Activated T-helper 1 cell treated with anti-CD3 and anti-CD28 coated beads, Interleukin-12 subunit alpha, Interleukin-12 subunit beta, Interleukin-2, Interleukin-4 antibody, amounts not matched to agents 30 ng/mL and 10 ng/mL and 1 ng/mL, durations not matched to agents 14 hours and 24 hours and 36 hours (primary cell): ENCODE measurements at regions of chr15 and their contacts with region 1.

Region 1: DNA sequence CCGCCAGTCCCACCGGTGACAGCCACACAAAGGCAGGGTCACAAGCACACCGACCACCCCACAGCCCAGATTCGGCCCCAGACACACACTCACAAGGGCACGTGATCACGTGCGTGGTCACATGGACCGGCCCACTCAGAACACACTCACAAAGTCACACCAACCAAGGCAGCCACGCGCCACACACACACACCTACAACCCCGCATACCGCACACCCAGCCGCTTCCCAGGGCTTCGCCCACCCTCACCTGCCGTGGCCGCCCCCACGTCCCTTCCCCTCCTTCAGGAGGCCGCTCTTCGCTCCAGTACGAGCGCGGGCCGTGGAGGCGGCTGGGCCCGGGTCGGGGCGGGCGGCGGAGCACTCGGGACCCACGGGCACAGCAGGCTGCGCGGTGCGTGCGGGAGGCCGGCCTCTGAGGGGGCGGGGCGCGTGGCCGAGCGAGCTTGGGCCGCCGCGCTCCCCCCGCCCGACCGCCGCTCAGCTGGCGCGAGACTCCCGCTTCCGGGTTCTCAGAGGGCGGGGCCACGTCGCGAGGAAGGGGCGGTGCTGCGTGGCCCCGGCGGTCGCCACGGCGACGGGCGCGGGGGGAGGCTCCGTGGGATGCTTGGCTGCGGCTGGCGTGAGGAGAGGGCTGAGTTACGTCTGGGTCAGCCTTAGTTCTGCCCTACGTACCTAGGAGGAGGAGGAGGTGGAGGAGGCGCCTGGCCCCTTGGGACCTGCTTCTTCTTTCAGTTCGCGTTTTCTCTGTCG is at the start of gene SPG21:
- DNase-seq: peak; percentile 92
- H3K4me3 Mint-ChIP-seq: peak within 1 kb of the TSS; percentile 99
- H3K27ac Mint-ChIP-seq: peak within 1 kb of the TSS; percentile 93
- H3K4me1 Mint-ChIP-seq: peaks cover 51% of the 10 kb centered on the region
- H3K27me3 Mint-ChIP-seq: no peaks in the 10 kb centered on the region
- total RNA-seq, gene SPG21: 70.2 and 73.3 TPM in 2 replicates

Region 2: GRCh38 chr15:64611085-64611725 is 378.4 kb before region 1 on chr15:
- intact Hi-C with region 1: no loop called
- DNase-seq: no peak
- H3K4me3 Mint-ChIP-seq: no peak overlapping the region
- H3K27ac Mint-ChIP-seq: no peak overlapping the region
- H3K4me1 Mint-ChIP-seq: peaks cover 21% of the 10 kb centered on the region
- H3K27me3 Mint-ChIP-seq: no peaks in the 10 kb centered on the region

Region 3: GRCh38 chr15:64702816-64703646 is 286.6 kb before region 1 on chr15:
- intact Hi-C with region 1: loop called (anchors 1 kb)
- DNase-seq: peak; percentile 93
- H3K4me3 Mint-ChIP-seq: peak overlapping the region; percentile 82
- H3K27ac Mint-ChIP-seq: peak overlapping the region; percentile 78
- H3K4me1 Mint-ChIP-seq: peaks cover 51% of the 10 kb centered on the region
- H3K27me3 Mint-ChIP-seq: peaks cover under 1% of the 10 kb centered on the region

Region 4: DNA sequence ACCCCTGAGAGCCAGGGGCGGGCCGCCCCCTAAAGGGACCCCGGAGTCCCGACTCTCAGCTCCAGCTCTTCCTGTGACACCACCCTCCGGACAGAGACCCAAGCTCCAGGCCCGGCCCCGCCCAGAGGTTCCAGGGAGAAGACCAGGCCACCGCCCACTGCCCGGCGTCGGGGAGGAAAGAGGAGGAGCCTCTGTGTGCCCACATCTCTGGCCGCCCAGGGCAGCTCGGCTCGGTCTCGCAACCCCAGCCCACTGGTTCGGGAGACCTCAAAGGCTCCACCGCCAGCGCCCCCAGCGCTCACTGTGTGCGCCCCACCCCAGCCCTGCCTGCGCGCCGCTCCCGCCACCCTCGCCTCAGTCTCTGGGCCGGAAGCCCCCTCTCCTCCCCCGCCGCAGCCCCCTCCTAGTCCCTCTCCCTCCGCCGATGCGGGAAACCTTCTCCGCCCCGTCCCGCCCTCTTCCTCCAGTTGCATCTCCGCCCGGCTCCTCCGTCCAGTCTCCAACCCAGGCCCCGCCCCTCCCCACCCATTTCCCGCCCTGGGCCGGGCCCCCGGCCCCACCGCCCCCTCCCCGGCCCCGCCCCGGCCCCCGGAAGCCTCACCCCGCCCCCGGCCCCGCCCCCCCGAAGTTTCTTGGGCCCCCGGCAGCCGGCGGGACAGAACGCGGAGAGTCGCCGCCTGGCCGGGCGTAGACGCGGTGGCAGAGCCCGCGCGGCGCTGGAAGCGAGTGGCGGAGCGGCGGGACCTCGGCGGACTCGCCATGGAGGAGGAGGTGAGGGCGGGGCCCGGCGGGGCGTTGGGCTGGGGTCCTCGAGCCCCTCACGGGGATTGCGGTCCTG is 148.1 kb before region 1 on chr15 and contains the start of gene PLEKHO2:
- intact Hi-C with region 1: loop called (anchors 2 kb)
- DNase-seq: peak; percentile 90
- H3K4me3 Mint-ChIP-seq: peak within 1 kb of the TSS; percentile 92
- H3K27ac Mint-ChIP-seq: peak within 1 kb of the TSS; percentile 91
- H3K4me1 Mint-ChIP-seq: peaks cover 74% of the 10 kb centered on the region
- H3K27me3 Mint-ChIP-seq: no peaks in the 10 kb centered on the region
- total RNA-seq, gene PLEKHO2: 17.0 and 17.8 TPM in 2 replicates

Region 5: GRCh38 chr15:64975390-64975789 is 14.2 kb before region 1 on chr15:
- intact Hi-C with region 1: loop called (anchors 2 kb)
- DNase-seq: no peak
- H3K4me3 Mint-ChIP-seq: no peak overlapping the region
- H3K27ac Mint-ChIP-seq: peak overlapping the region; percentile 55
- H3K4me1 Mint-ChIP-seq: peaks cover 7% of the 10 kb centered on the region
- H3K27me3 Mint-ChIP-seq: no peaks in the 10 kb centered on the region

Region 6: DNA sequence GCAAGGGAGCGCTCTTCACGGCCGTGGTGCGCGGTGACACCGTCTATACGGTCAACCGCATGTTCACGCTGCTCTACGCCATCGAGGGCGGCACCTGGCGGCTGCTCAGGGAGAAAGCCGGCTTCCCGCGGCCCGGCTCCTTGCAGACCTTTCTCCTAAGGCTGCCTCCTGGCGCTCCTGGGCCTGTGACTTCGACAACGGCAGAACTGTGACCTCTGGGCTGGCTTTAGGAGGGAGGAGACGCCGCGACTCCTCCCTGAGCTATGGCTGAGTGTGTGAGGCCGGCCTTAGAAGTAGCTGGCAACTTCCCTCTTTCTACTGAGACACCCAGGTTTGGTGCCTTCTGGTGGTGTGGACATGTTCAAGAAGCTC is 88.4 kb after region 1 on chr15:
- intact Hi-C with region 1: no loop called
- DNase-seq: peak; percentile 29
- H3K4me3 Mint-ChIP-seq: no peak overlapping the region
- H3K27ac Mint-ChIP-seq: no peak overlapping the region
- H3K4me1 Mint-ChIP-seq: peaks cover 16% of the 10 kb centered on the region
- H3K27me3 Mint-ChIP-seq: peaks cover 34% of the 10 kb centered on the region

Region 7: GRCh38 chr15:65133548-65134200 is 144.1 kb after region 1 on chr15 and contains the start of gene PDCD7:
- intact Hi-C with region 1: loop called (anchors 1 kb)
- DNase-seq: peak; percentile 80
- H3K4me3 Mint-ChIP-seq: peak within 1 kb of the TSS; percentile 92
- H3K27ac Mint-ChIP-seq: peak within 1 kb of the TSS; percentile 93
- H3K4me1 Mint-ChIP-seq: peaks cover 31% of the 10 kb centered on the region
- H3K27me3 Mint-ChIP-seq: peaks cover 2% of the 10 kb centered on the region
- total RNA-seq, gene PDCD7: 51.2 and 54.7 TPM in 2 replicates